Pancreas (tissue), 10 donors: ENCODE measurements at regions of chr3 and their contacts with region 1.

Region 1: GRCh38 chr3:175983379-175983778 is 1124.2 kb downstream of the NAALADL2 start:
- DNase-seq: no peak
- ATAC-seq: no peak
- H3K4me3 ChIP-seq: no peak overlapping the region
- H3K27ac ChIP-seq: no peak overlapping the region
- H3K4me1 ChIP-seq: no peaks in the 10 kb centered on the region
- H3K27me3 ChIP-seq: no peaks in the 10 kb centered on the region
- CTCF ChIP-seq: no peak

Region 2: DNA sequence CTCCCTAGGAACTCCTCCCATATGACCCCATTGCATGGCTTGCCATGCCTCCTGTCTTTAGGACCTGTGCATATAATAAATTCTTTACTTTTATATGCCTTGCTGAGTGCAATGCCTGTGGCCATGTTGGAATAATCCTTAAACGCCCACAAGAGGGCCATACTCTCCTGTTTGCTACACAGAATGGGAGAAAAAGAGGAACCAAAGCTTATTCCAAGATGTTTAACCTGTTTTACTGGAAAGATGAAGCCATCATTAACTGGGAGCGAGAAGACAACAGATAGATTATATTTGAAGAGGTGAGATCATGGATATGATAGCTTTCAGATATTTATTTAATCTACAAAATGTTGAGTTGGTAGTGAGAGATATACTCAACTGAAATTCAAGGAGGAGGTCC is 26.4 kb before region 1 on chr3:
- intact Hi-C with region 1: loop called in 1 of 3 experiments (anchors 2 kb)
- DNase-seq: no peak
- ATAC-seq: no peak
- H3K4me3 ChIP-seq: no peak overlapping the region
- H3K27ac ChIP-seq: no peak overlapping the region
- H3K4me1 ChIP-seq: no peaks in the 10 kb centered on the region
- H3K27me3 ChIP-seq: no peaks in the 10 kb centered on the region
- CTCF ChIP-seq: no peak